BJ (cell line): ENCODE measurements at regions of chr18 and their contacts with region 1.

Region 1: GRCh38 chr18:8400296-8400695 is 208.9 kb upstream of the RAB12 start:
- DNase-seq: no peak
- H3K4me3 ChIP-seq: no peak overlapping the region
- H3K27me3 ChIP-seq: no peaks in the 10 kb centered on the region
- CTCF ChIP-seq: no peak

Region 2: GRCh38 chr18:8247700-8248099 is 152.6 kb before region 1 on chr18:
- CTCF ChIA-PET with region 1: no interaction called
- POLR2A ChIA-PET with region 1: no interaction called
- DNase-seq: no peak
- H3K4me3 ChIP-seq: no peak overlapping the region
- H3K27me3 ChIP-seq: no peaks in the 10 kb centered on the region
- CTCF ChIP-seq: no peak

Region 3: DNA sequence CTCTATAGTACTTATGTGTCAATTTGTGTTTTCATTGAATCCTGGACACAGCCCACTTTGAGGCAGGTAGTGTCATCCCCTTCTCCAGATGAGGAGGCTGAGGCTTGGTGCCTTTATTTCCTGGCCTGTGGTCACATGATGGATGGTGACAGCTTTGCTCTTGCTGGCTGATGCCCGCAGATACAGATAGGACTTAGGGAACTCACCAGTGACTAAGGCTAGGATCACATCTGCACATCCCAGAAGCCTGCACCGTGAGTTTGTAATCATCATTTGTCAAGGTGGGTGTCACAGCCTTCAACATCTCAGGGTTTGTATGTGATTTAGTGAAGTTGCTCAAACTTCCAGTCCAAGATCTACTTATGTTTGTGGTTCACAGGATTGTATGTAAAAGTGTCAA is 86.2 kb before region 1 on chr18:
- CTCF ChIA-PET with region 1: no interaction called
- POLR2A ChIA-PET with region 1: interaction called, 20 read pairs
- DNase-seq: no peak
- H3K4me3 ChIP-seq: no peak overlapping the region
- H3K27me3 ChIP-seq: no peaks in the 10 kb centered on the region
- CTCF ChIP-seq: no peak

Region 4: GRCh38 chr18:8507361-8507760 is 107.1 kb after region 1 on chr18:
- CTCF ChIA-PET with region 1: no interaction called
- POLR2A ChIA-PET with region 1: no interaction called
- DNase-seq: no peak
- H3K4me3 ChIP-seq: no peak overlapping the region
- H3K27me3 ChIP-seq: peaks cover 8% of the 10 kb centered on the region
- CTCF ChIP-seq: peak; percentile 31; the same call in 1 of the 2 replicates